Activated naive CD4-positive, alpha-beta T cell treated with anti-CD3 and anti-CD28 coated beads, Interleukin-2, amount 10 ng/mL, durations not matched to agents 7 days and 5 days (primary cell): ENCODE measurements at regions of chr6 and their contacts with region 1.

Region 1: GRCh38 chr6:90098001-90098531 is 198.6 kb downstream of the BACH2 start:
- DNase-seq: peak; percentile 51
- H3K4me3 Mint-ChIP-seq: peak overlapping the region; percentile 7
- H3K27ac Mint-ChIP-seq: peak overlapping the region; percentile 78
- H3K4me1 Mint-ChIP-seq: peaks cover 85% of the 10 kb centered on the region
- H3K27me3 Mint-ChIP-seq: no peaks in the 10 kb centered on the region

Region 2: GRCh38 chr6:90080876-90081481 is 17.1 kb before region 1 on chr6:
- CTCF ChIA-PET with region 1: interaction called, 13 read pairs
- DNase-seq: peak; percentile 87
- H3K4me3 Mint-ChIP-seq: peak overlapping the region; percentile 92
- H3K27ac Mint-ChIP-seq: peak overlapping the region; percentile 99
- H3K4me1 Mint-ChIP-seq: peaks cover 88% of the 10 kb centered on the region
- H3K27me3 Mint-ChIP-seq: no peaks in the 10 kb centered on the region